PC-3 (cell line): ENCODE measurements at regions of chr14 and their contacts with region 1.

Region 1: GRCh38 chr14:88710702-88711101 is 82.1 kb downstream of the EML5 start:
- DNase-seq: no peak
- ATAC-seq: no peak
- H3K4me3 ChIP-seq: no peak overlapping the region
- H3K27ac ChIP-seq: no peak overlapping the region
- H3K4me1 ChIP-seq: peaks cover 13% of the 10 kb centered on the region
- H3K27me3 ChIP-seq: no peaks in the 10 kb centered on the region
- CTCF ChIP-seq: no peak

Region 2: DNA sequence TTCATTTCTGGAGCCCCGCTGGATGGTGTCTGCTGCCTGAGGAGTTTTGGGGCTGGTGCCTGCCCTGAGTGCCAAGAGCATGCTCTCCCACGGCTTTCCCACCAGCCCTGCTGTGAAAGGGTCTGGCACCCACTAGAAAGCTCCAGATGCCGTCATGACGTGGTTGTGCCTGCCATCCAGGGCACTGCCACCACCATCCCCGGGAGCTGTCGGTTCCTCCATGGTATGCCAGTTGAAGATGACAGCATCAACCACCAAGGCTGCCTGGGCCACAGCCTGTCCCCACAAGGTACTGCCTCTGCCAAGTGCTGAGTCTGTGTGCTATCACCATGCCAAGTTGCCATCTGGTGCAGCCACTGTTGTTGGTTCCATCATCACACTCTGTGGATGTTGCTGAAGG is 199.7 kb after region 1 on chr14:
- CTCF ChIA-PET with region 1: no interaction called
- POLR2A ChIA-PET with region 1: no interaction called
- intact Hi-C with region 1: no loop called
- DNase-seq: no peak
- ATAC-seq: no peak
- H3K4me3 ChIP-seq: no peak overlapping the region
- H3K27ac ChIP-seq: no peak overlapping the region
- H3K4me1 ChIP-seq: no peaks in the 10 kb centered on the region
- H3K27me3 ChIP-seq: no peaks in the 10 kb centered on the region
- CTCF ChIP-seq: no peak

Region 3: GRCh38 chr14:89444044-89444443 is 733.3 kb after region 1 on chr14:
- CTCF ChIA-PET with region 1: no interaction called
- POLR2A ChIA-PET with region 1: interaction called, 12 read pairs
- intact Hi-C with region 1: no loop called
- DNase-seq: no peak
- ATAC-seq: no peak
- H3K4me3 ChIP-seq: no peak overlapping the region
- H3K27ac ChIP-seq: no peak overlapping the region
- H3K4me1 ChIP-seq: peaks cover 10% of the 10 kb centered on the region; the same call in 1 of the 2 replicates
- H3K27me3 ChIP-seq: no peaks in the 10 kb centered on the region
- CTCF ChIP-seq: no peak